ENCODE measurements at regions of chr17 and their contacts with region 1.

Region 1: GRCh38 chr17:14300575-14301278 is at the start of gene HS3ST3B1:
- DNase-seq: peak; percentile 93
- H3K4me3 ChIP-seq: peak within 1 kb of the TSS; percentile 54 to 78
- H3K27ac ChIP-seq: no peak within 1 kb of the TSS; a peak in 1 of 4 replicates
- H3K4me1 ChIP-seq: peaks cover 0 to 23% of the 10 kb centered on the region in 2 experiments; a peak in 2 of 4 replicates
- H3K27me3 ChIP-seq: peaks cover 43% of the 10 kb centered on the region
- CTCF ChIP-seq: no peak
- EP300 ChIP-seq: no peak
- RAD21 ChIP-seq: no peak
- polyA plus RNA-seq, gene HS3ST3B1: 0.55 and 0.67 TPM in 2 replicates

Region 2: DNA sequence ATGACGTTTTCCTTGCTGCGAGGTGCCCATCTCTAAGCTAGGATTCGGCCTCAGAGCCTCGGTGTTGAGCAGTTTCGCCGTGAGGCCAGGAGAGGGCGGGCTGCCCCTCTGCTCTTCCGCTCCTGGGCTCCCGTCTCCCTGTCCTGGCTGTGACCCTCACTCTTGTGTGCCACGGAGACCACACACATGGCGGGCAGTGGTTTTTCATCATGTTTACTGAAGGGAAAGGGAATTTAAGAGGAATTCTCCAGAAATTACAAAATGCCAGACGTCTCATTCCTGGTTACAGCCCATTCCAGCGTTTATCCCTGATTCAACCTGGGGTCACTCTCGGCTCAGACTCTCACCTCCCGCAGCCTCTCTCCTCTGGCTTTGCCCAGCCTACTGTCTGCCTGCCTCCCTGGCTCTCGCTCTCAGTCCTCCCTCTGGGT is 1186.1 kb before region 1 on chr17:
- CTCF ChIA-PET with region 1: interaction called, 22 read pairs
- POLR2A ChIA-PET with region 1: no interaction called
- DNase-seq: peak; percentile 69
- H3K4me3 ChIP-seq: peak overlapping the region in 1 of 2 experiments; percentile 38; a peak in 1 of 4 replicates
- H3K27ac ChIP-seq: no peak overlapping the region
- H3K4me1 ChIP-seq: no peaks in the 10 kb centered on the region; a peak in 1 of 4 replicates
- H3K27me3 ChIP-seq: peaks cover 40% of the 10 kb centered on the region
- CTCF ChIP-seq: peak; percentile 77
- EP300 ChIP-seq: no peak
- RAD21 ChIP-seq: peak; percentile 73

Region 3: DNA sequence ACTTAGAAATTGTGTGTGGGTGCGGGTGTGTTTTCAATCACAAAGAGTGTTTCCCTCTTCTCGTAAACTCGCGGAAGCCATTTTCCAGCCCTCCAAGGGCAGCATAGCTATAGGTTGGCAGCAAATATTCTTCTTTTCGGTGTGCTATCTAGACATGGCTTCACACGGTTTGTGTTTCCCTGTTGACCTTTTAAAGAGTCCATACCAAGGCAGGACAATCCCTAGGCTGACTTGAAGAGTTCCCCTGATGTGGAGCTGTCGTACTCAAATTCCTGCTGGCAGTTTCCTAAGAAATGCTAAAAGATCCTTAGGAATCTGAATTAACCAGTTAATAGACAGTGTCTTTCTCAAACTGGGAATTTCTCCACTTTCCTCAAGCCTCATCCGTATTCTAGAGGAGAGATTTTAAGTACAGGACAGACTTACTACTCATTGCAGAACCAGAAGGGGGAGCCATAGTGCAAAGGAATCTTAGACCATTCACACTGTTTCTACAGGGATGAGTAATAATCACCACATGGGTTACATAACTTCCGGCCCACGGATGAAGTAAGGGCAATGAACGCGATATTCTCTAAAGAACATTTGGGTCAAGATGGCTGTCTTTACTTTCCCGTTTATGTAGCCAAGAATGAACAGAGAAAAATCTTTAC is 994.3 kb before region 1 on chr17:
- CTCF ChIA-PET with region 1: interaction called, 15 read pairs
- POLR2A ChIA-PET with region 1: no interaction called
- DNase-seq: peak; percentile 60
- H3K4me3 ChIP-seq: peak overlapping the region in 1 of 2 experiments; percentile 28; a peak in 1 of 4 replicates
- H3K27ac ChIP-seq: no peak overlapping the region
- H3K4me1 ChIP-seq: no peaks in the 10 kb centered on the region
- H3K27me3 ChIP-seq: no peaks in the 10 kb centered on the region; the same call in 1 of the 2 replicates
- CTCF ChIP-seq: peak; percentile 79
- EP300 ChIP-seq: no peak
- RAD21 ChIP-seq: peak; percentile 87

Region 4: GRCh38 chr17:13337864-13338371 is 962.8 kb before region 1 on chr17:
- CTCF ChIA-PET with region 1: interaction called, 10 read pairs
- POLR2A ChIA-PET with region 1: no interaction called
- DNase-seq: peak; percentile 51
- H3K4me3 ChIP-seq: peak overlapping the region; percentile 41 to 57
- H3K27ac ChIP-seq: peak overlapping the region; percentile 37 to 62; a peak in 3 of 4 replicates
- H3K4me1 ChIP-seq: peaks cover 0 to 3% of the 10 kb centered on the region in 2 experiments; a peak in 1 of 4 replicates
- H3K27me3 ChIP-seq: no peaks in the 10 kb centered on the region
- CTCF ChIP-seq: peak; percentile 93
- EP300 ChIP-seq: peak in 1 of 2 experiments; percentile 82; a peak in 2 of 4 replicates
- RAD21 ChIP-seq: peak; percentile 96

Region 5: GRCh38 chr17:13594762-13595598 is 705.7 kb before region 1 on chr17:
- CTCF ChIA-PET with region 1: interaction called, 25 read pairs
- POLR2A ChIA-PET with region 1: no interaction called
- DNase-seq: peak; percentile 70
- H3K4me3 ChIP-seq: peak overlapping the region; percentile 3 to 40; a peak in 2 of 4 replicates
- H3K27ac ChIP-seq: peak overlapping the region; percentile 11 to 58; a peak in 3 of 4 replicates
- H3K4me1 ChIP-seq: peaks cover 4 to 7% of the 10 kb centered on the region in 2 experiments; a peak in 3 of 4 replicates
- H3K27me3 ChIP-seq: no peaks in the 10 kb centered on the region
- CTCF ChIP-seq: peak; percentile 94
- EP300 ChIP-seq: no peak
- RAD21 ChIP-seq: peak; percentile 67

Region 6: DNA sequence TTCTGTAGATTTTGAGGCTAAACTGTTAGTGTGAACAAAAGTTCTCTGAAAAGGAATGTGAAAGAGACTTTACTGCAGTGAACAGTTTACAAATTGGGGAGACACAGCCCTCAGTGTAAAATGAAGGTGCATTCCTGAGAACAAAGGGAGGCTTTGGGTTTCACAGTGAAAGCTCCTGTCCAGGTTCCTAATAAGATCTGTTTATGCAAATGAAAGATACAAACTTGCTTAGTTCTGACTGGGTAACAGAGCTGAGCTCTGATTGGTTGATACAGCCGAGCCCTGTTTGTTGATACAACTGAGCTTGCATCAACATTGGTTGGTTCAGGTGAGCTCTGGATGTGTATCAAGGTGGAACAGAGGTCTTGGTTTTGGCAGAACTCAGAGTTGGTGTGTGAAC is 55.7 kb before region 1 on chr17:
- CTCF ChIA-PET with region 1: no interaction called
- POLR2A ChIA-PET with region 1: no interaction called
- DNase-seq: no peak
- H3K4me3 ChIP-seq: no peak overlapping the region
- H3K27ac ChIP-seq: no peak overlapping the region
- H3K4me1 ChIP-seq: no peaks in the 10 kb centered on the region
- H3K27me3 ChIP-seq: peaks cover 14% of the 10 kb centered on the region; the same call in 1 of the 2 replicates
- CTCF ChIP-seq: no peak
- EP300 ChIP-seq: no peak
- RAD21 ChIP-seq: no peak

Region 7: GRCh38 chr17:14316150-14316785 is 15.5 kb after region 1 on chr17:
- CTCF ChIA-PET with region 1: interaction called, 17 read pairs
- POLR2A ChIA-PET with region 1: no interaction called
- DNase-seq: no peak
- H3K4me3 ChIP-seq: no peak overlapping the region
- H3K27ac ChIP-seq: no peak overlapping the region
- H3K4me1 ChIP-seq: no peaks in the 10 kb centered on the region
- H3K27me3 ChIP-seq: no peaks in the 10 kb centered on the region; the same call in 1 of the 2 replicates
- CTCF ChIP-seq: no peak
- EP300 ChIP-seq: no peak
- RAD21 ChIP-seq: no peak

Region 8: DNA sequence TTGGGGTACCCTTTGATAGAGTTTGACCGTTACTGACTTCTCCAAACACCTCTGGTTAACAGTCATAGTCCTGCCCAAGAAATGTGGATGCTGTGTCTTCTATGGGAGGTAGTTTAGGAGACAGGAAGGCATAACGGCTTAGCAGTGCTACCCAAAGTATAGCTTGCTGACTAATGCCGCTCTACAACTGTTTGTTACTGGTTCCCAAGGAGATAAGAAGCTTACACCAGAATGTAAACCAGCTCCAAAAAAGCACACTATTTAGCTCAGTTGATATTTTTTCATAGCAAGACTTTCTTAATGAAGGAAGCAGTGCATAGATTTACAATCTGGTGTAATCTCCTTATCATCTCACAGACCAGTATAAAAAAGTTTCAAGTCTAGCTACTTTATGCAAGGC is 95.8 kb after region 1 on chr17:
- CTCF ChIA-PET with region 1: no interaction called
- POLR2A ChIA-PET with region 1: no interaction called
- DNase-seq: no peak
- H3K4me3 ChIP-seq: no peak overlapping the region
- H3K27ac ChIP-seq: no peak overlapping the region
- H3K4me1 ChIP-seq: no peaks in the 10 kb centered on the region
- H3K27me3 ChIP-seq: no peaks in the 10 kb centered on the region; the same call in 1 of the 2 replicates
- CTCF ChIP-seq: no peak
- EP300 ChIP-seq: no peak
- RAD21 ChIP-seq: no peak

Region 9: DNA sequence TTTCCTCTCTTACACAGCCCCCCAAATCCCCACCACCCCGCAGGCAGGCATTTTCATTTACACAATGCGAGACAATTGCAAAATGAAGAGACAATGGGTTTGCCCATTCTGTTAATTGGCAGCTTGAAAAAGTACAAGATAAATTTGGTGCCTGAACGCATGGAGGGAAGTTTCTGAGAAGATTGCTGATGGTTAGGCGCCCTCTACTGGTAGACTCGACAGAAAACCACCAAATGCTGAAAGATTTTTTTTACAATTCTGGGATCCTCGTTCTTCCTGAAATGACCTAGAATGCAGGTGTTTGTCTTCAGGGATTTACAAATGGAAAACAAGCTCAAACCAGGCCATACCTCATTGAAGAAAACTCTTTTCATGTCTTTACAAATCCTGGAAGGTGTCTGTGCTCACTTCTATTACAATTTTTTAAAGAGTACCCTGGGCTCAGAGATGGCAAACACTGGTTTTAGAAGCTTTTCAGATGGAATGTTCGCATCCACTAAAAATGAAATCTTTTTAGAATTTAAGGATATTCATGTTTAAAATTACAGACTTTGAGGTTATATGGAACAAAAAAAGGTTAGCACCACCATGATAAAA is 625.9 kb after region 1 on chr17:
- CTCF ChIA-PET with region 1: interaction called, 12 read pairs
- POLR2A ChIA-PET with region 1: no interaction called
- DNase-seq: peak; percentile 26
- H3K4me3 ChIP-seq: no peak overlapping the region
- H3K27ac ChIP-seq: no peak overlapping the region
- H3K4me1 ChIP-seq: no peaks in the 10 kb centered on the region
- H3K27me3 ChIP-seq: peaks cover 31% of the 10 kb centered on the region; the same call in 1 of the 2 replicates
- CTCF ChIP-seq: peak; percentile 85
- EP300 ChIP-seq: no peak
- RAD21 ChIP-seq: peak; percentile 84